Activated naive CD8-positive, alpha-beta T cell treated with anti-CD3 and anti-CD28 coated beads, Interleukin-2, amount 10 ng/mL, durations not matched to agents 7 days and 5 days (primary cell): ENCODE measurements at regions of chr2 and their contacts with region 1.

Region 1: DNA sequence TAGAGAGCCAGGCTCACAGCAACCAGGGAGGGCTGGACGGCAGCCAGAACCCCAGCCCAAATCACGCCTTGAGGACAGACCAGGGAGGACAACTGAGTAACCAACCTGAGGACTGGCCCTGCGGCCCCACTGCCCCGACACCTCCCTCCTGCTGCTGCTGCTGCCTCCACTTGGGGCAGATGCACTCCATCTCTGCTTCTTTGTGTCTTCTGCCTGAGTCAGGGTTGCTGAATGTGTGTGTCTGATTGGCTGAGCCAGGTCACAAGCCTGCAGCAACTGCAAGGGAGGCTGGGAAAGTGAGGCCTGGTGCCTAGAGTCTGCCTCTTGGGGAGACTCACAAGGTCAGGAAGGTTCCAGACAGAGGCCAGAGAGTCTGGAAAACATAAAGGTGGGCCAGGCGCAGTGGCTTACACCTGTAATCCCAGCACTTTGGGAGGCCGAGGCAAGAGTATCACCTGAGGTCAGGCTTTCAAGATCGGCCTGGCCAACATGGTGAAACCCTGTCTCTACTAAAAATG is 83.4 kb downstream of the ZFP36L2 start:
- DNase-seq: peak; percentile 58
- ATAC-seq: peak; percentile 76
- H3K4me3 Mint-ChIP-seq: peak overlapping the region; percentile 85
- H3K27ac Mint-ChIP-seq: peak overlapping the region; percentile 85
- H3K4me1 Mint-ChIP-seq: peaks cover 50% of the 10 kb centered on the region
- H3K27me3 Mint-ChIP-seq: no peaks in the 10 kb centered on the region

Region 2: GRCh38 chr2:43158259-43158880 is 15.4 kb after region 1 on chr2:
- POLR2A ChIA-PET with region 1: interaction called, 11 read pairs
- DNase-seq: peak; percentile 69
- ATAC-seq: peak; percentile 67
- H3K4me3 Mint-ChIP-seq: peak overlapping the region; percentile 71
- H3K27ac Mint-ChIP-seq: peak overlapping the region; percentile 95
- H3K4me1 Mint-ChIP-seq: peaks cover 44% of the 10 kb centered on the region
- H3K27me3 Mint-ChIP-seq: no peaks in the 10 kb centered on the region

Region 3: GRCh38 chr2:43194121-43194869 is 51.3 kb after region 1 on chr2:
- POLR2A ChIA-PET with region 1: interaction called, 11 read pairs
- DNase-seq: peak; percentile 53
- ATAC-seq: peak; percentile 12
- H3K4me3 Mint-ChIP-seq: peak overlapping the region; percentile 81
- H3K27ac Mint-ChIP-seq: peak overlapping the region; percentile 94
- H3K4me1 Mint-ChIP-seq: peaks cover 57% of the 10 kb centered on the region
- H3K27me3 Mint-ChIP-seq: no peaks in the 10 kb centered on the region